Activated CD4-positive, alpha-beta T cell treated with anti-CD3 and anti-CD28 coated beads for 36 hours (primary cell): ENCODE measurements at regions of chr2 and their contacts with region 1.

Region 1: DNA sequence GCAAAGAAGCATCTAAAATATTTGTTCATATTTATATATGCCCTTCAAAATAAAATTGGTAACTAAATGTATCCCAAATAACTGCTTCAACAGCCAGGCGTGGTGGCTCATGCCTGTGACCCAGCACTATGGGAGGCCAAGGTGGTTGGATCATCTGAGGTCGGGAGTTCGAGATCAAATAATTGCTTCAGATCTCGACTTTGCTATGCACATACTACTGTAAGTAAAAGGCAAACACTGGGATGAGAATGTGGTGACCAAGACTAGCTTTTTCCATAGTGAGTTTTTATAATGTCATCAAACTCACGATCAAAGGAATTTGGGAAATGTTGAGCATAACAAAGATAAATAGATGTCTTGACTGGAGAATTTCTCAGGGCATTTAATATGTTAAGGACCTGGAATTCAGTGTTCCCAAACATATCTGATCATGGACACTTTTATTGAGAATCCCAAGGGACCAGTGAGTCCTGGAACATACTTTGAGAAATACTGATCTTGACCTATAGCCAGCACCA is 205.6 kb downstream of the ARHGAP15 start:
- DNase-seq: no peak
- ATAC-seq: no peak
- H3K4me3 Mint-ChIP-seq: no peak overlapping the region
- H3K27ac Mint-ChIP-seq: no peak overlapping the region
- H3K4me1 Mint-ChIP-seq: peaks cover 49% of the 10 kb centered on the region
- H3K27me3 Mint-ChIP-seq: no peaks in the 10 kb centered on the region

Region 2: DNA sequence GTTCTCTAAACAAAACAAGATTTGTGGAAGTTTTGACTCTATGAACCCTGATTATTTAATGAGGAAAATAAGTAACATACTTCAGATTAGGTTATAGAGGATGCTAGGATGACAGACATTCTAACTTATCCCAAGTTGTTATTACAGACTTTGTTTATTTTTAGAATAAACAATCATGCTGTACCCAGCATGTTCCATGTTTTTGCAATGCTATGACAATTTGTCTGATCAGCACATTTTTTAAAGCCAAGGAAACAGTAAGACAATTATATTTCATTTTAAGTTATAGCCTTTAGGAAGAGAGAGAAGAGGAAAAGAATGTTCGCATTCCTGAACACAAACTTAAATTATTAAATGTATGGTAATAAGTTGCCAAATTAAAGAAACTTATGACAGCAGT is 337.5 kb before region 1 on chr2:
- CTCF ChIA-PET with region 1: no interaction called
- POLR2A ChIA-PET with region 1: no interaction called
- intact Hi-C with region 1: no loop called
- DNase-seq: no peak
- ATAC-seq: no peak
- H3K4me3 Mint-ChIP-seq: no peak overlapping the region
- H3K27ac Mint-ChIP-seq: no peak overlapping the region
- H3K4me1 Mint-ChIP-seq: no peaks in the 10 kb centered on the region
- H3K27me3 Mint-ChIP-seq: peaks cover 27% of the 10 kb centered on the region

Region 3: GRCh38 chr2:143345887-143346787 is 11.4 kb after region 1 on chr2:
- CTCF ChIA-PET with region 1: no interaction called
- POLR2A ChIA-PET with region 1: no interaction called
- intact Hi-C with region 1: loop called in 1 of 2 experiments (anchors 2 kb)
- DNase-seq: no peak
- ATAC-seq: no peak
- H3K4me3 Mint-ChIP-seq: no peak overlapping the region
- H3K27ac Mint-ChIP-seq: no peak overlapping the region
- H3K4me1 Mint-ChIP-seq: peaks cover 25% of the 10 kb centered on the region
- H3K27me3 Mint-ChIP-seq: no peaks in the 10 kb centered on the region